HEK293T (cell line): ENCODE measurements at regions of chr12 and their contacts with region 1.

Region 1: DNA sequence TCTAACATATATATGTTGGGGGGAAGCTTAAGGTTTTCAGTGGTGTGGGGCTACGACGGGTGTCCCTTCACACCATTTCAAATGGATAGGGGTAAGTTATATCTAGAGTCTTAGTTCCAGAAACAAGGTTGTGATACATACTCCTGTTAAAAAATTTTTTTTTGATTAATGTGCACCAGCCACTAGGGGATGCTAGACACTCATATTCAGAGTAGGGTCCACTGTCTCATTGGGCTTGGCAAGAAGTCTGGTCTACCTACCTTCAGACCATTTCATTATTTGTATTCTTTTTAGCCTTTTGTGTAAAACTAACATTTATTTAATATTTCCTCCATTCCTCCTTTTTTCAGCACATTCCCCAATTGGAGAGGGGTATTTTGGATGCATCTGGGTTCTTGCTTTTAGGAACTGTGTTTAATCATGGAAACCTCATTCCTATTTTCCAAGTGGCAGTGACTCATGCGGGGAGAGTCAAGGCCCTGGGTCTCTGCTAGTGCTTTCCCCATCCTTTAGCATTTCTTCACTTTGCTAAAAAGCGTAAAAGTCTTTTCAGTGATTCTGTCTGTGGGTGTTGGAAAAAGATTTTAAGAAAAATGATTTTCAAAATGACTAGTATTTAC is 33.4 kb downstream of the ANO4 start:
- DNase-seq: peak; percentile 38

Region 2: GRCh38 chr12:100842156-100842555 is 14.1 kb after region 1 on chr12:
- CTCF ChIA-PET with region 1: no interaction called
- POLR2A ChIA-PET with region 1: no interaction called
- DNase-seq: no peak

Region 3: DNA sequence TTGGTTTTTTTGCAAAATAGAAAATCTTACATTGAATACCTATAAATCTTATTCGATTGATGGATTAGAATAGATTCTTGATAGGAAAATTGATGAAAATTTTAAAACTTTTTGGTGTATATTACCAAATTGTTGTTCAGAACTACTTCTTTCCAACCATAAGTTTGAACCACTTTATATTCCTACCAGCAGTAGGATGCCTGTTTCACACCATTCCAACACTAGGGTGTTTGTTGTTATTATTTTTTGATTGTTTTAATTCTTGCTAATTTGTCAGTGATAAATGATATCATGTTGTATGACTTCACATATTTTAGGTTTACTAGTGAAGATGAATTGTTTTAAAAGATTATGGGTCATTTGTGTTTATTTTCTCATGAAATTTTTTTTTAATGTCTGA is 495.2 kb after region 1 on chr12:
- CTCF ChIA-PET with region 1: interaction called, 11 read pairs
- POLR2A ChIA-PET with region 1: no interaction called
- DNase-seq: no peak